ENCODE measurements at regions of chr12 and their contacts with region 1.

Region 1: DNA sequence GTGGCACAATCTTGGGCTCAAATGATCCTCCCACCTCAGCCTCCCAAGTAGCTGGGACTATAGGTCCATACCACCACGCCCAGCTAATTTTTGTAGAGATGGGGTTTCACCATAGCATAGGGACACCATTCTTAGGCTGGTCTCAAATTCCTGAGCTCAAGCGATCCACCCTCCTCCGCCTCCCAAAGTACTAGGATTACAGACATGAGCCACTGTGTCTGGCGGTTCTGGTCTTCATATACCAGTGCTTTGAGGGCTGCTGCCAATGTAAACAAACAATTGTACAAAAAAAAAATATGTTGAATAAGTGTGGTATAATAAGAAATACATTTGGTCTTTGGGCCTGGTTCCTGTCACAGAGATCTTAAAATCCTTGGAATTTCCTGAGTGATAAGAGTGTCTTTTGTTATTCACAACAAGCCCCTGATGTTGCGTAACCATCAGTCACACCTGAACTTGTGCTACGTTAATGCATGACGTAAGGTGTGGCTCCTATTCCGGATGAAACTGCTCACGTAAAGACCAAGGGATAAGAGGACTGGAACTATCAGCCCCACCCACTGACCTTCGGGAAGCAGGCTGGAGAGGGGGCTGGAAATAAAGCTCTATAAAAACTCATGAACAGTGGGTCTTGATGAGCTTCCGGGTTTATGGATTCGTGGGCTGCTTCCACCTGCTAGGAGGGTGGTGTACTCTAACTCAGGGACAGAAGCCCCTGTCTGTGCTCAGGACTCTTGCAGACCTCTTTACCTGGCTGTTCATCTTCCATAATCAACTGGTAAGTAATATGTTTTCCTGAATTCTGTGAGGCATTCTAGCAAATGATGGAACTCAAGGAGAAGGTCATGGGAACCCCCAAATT is 16.5 kb upstream of the RIMKLB start:
- DNase-seq: no peak
- H3K4me3 ChIP-seq: no peak overlapping the region
- H3K27ac ChIP-seq: no peak overlapping the region
- H3K4me1 ChIP-seq: no peaks in the 10 kb centered on the region
- H3K27me3 ChIP-seq: no peaks in the 10 kb centered on the region
- CTCF ChIP-seq: no peak

Region 2: DNA sequence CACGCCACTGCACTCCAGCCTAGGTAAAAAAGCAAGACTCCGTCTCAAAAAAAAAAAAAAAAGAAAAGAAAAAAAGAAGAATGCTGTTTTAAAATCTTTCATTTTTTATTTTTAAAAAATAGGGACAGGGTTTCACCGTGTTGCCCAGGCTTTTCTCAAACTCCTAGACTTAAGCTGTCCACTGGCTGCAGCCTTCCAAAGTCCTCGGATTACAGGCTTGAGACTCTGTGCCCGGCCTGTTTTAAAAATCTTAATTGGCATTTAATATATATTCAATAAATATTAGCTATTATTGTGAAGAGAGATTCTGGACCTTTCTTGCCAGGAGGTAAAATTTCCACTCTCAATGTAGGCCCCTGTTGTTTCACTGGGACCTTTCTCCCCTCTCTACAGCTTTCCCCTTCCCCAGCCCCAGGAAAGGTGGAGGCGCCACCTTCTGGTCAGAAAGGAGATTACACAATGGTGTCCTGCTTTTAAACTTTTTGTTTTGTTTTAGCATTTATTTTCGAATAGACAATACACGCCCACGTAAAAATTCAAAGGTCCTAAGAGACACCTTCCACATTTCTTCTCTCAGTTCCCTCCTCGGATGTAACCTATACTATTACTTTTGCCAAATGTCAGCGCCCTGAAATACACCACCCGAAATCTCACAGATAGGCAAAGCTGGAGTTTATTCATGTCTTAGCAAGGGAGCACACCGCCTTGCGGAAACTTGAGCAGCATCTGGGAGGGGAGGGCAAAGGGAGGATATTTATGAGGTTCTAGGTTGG is 209.2 kb after region 1 on chr12:
- intact Hi-C with region 1: loop called (anchors 5 kb)
- DNase-seq: peak; percentile 50
- H3K4me3 ChIP-seq: peak overlapping the region; percentile 30
- H3K27ac ChIP-seq: no peak overlapping the region
- H3K4me1 ChIP-seq: no peaks in the 10 kb centered on the region
- H3K27me3 ChIP-seq: no peaks in the 10 kb centered on the region
- CTCF ChIP-seq: peak; percentile 80

Region 3: GRCh38 chr12:9041321-9041720 is 360.0 kb after region 1 on chr12:
- intact Hi-C with region 1: loop called (anchors 5 kb)
- DNase-seq: no peak
- H3K4me3 ChIP-seq: no peak overlapping the region
- H3K27ac ChIP-seq: no peak overlapping the region
- H3K4me1 ChIP-seq: no peaks in the 10 kb centered on the region
- H3K27me3 ChIP-seq: no peaks in the 10 kb centered on the region
- CTCF ChIP-seq: no peak

Measured in colonic mucosa (tissue), 4 donors.